ENCODE measurements at regions of chr2 and their contacts with region 1.

Region 1: DNA sequence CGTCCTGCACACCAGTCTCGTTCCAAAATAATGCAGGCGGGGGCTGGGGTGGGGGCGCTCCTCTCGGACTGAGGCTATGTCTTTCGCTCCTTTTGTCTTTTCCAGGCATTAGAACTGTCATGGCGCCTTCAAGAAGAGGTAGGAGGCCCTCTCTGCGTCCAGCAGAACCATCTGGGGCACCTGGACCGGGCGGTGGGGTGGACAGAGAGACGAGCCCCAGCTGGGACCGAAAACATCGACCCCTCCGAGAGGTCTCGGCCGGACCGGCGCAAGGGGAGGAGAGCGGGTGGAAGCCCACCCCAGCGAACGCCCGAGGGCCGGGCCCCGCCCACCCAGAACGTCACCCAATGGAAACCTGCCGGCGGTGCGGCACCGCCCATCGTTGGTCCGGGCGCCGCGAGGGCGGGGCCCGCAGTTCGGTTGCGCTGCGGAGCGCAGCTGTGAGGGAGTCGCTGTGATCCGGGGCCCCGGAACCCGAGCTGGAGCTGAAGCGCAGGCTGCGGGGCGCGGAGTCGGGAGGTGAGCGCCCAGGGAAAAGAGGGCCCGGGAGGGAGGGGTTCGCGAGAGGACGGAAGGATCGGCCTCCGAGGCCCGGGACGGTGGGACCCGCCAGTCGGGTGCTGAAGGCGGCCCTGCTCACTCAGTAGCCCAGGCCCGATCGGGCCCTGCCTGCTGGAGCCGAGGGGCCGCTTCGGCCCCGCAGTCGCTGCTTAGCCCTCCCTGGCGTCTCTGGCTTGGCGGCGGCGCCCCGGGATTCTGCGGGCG is at the start of gene NRBP1:
- DNase-seq: peak; percentile 90 to 97 (median 93)
- H3K4me3 ChIP-seq: peak within 1 kb of the TSS; percentile 98
- H3K27ac ChIP-seq: peak within 1 kb of the TSS; percentile 93 to 97
- H3K4me1 ChIP-seq: peaks cover 8% of the 10 kb centered on the region
- H3K27me3 ChIP-seq: no peaks in the 10 kb centered on the region
- CTCF ChIP-seq: peak in 1 of 3 donors; percentile 6
- EP300 ChIP-seq: no peak
- POLR2A ChIP-seq: peak; percentile 90
- total RNA-seq, gene NRBP1: 50.8 to 108 (median 90.0) TPM

Region 2: DNA sequence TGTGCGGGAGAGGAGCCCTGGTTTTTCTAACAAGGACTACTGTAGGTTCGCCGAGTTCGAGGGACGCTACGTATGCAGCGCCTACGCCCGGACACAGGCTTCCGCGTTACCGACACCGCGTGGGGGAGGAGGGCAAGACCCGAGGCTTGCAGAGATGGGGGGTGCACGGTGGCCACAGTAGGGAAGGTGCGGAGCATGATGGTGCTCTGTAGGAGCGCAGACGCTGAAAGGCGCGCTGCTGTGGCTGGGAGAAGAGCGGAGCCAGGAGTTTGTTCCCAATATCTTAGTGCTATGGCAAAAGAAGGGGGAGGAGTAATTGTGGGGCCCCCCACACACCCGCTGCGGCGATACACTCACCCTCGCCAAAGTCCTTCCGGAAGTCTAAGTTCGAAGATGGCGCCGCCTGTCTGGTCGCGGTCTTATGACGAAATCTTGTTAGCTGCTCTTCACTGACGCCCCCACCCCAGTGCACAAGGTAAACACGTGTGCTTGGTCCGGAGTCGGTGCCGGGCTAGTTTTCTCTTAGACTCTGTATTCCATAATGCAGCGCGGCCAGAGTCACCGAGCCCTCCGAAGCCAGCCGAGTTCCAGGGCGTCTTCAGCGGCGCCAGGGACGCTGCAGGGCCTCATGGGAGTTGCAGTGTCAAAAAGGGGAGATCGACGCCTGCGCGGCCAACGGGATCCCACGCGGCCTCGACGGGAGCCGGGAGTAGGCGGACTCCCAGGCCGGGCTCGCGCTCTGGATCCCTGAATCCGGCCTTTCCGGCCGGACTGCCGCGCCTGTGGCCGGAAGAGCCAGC is 71.8 kb before region 1 on chr2 and contains the start of gene GTF3C2:
- intact Hi-C with region 1: no loop called
- DNase-seq: peak; percentile 92 to 97 (median 93)
- H3K4me3 ChIP-seq: peak within 1 kb of the TSS; percentile 89
- H3K27ac ChIP-seq: peak within 1 kb of the TSS; percentile 18 to 71
- H3K4me1 ChIP-seq: peaks cover 7% of the 10 kb centered on the region
- H3K27me3 ChIP-seq: no peaks in the 10 kb centered on the region
- CTCF ChIP-seq: peak in 1 of 3 donors; percentile 10
- EP300 ChIP-seq: no peak
- POLR2A ChIP-seq: peak; percentile 38
- total RNA-seq, gene GTF3C2: 32.8 to 57.7 (median 45.8) TPM

Region 3: GRCh38 chr2:27370026-27370815 is 58.2 kb before region 1 on chr2 and contains the starts of genes EIF2B4 and SNX17:
- intact Hi-C with region 1: loop called in 1 of 4 experiments (anchors 10 kb)
- DNase-seq: peak; percentile 98 to 99 (median 99)
- H3K4me3 ChIP-seq: peak within 1 kb of the TSS; percentile 85
- H3K27ac ChIP-seq: peak within 1 kb of the TSS; percentile 75 to 82
- H3K4me1 ChIP-seq: peaks cover 12% of the 10 kb centered on the region
- H3K27me3 ChIP-seq: no peaks in the 10 kb centered on the region
- CTCF ChIP-seq: peak; percentile 68 to 91 (median 91)
- EP300 ChIP-seq: no peak
- POLR2A ChIP-seq: peak; percentile 59
- total RNA-seq, gene EIF2B4: 28.0 to 46.8 (median 39.0) TPM
- total RNA-seq, gene SNX17: 72.3 to 111 (median 100) TPM